Activated CD4-positive, alpha-beta T cell treated with anti-CD3 and anti-CD28 coated beads, Interleukin-2, amount 10 ng/mL, durations not matched to agents 24 days and 14 days (primary cell): ENCODE measurements at regions of chr11 and their contacts with region 1.

Region 1: DNA sequence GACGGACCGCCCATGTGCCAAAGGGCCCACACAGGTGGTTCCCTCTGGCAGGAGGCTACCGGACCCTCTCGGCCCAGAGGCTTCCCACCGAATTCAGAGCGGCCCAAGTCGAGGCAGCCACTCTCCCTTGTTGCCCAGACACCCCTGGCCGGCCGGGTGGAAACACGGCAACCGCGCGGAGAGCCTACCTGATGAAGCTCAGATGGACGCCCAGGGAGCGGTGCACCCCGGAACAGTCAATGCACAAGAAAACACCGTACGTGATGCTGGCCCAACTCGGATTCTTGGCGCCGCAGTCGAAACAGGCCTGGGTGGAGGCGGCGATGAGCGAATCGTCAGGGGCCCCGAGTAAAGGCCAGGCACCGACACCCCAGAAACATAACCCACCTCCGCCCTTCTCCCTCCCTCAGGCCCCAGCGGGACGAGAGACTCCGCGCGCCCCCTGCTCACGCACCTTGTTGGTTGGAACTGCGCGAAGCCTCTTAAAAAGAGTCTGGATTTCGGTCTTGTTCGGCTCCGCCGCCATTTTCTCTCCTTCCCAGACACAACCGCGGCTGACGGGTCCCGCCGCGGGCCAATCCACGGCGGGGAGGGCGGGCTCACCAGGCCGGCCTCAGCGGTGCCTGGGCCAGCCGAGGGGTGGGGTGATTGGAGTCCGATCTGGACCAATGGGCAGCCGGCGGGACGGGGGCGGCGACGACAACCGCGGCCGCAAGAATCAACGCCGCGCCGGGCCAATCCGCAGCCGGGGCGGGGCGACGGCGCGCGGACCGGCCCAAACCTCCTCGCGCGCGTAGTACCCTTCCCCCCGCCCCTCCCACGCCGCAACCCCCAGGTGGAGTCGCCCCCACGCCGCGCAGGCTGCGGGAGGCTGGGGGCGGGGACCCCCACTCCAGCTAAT is at the start of gene ARFGAP2:
- DNase-seq: peak; percentile 99
- H3K4me3 Mint-ChIP-seq: peak within 1 kb of the TSS; percentile 92
- H3K27ac Mint-ChIP-seq: peak within 1 kb of the TSS; percentile 99
- H3K4me1 Mint-ChIP-seq: peaks cover 32% of the 10 kb centered on the region
- H3K27me3 Mint-ChIP-seq: no peaks in the 10 kb centered on the region
- total RNA-seq, gene ARFGAP2: 98.3 and 109 TPM in 2 replicates

Region 2: GRCh38 chr11:46700241-46701077 is 476.1 kb before region 1 on chr11 and contains the starts of genes ARHGAP1 and ZNF408:
- intact Hi-C with region 1: loop called (anchors 2 kb)
- DNase-seq: peak; percentile 100
- H3K4me3 Mint-ChIP-seq: peak within 1 kb of the TSS; percentile 99
- H3K27ac Mint-ChIP-seq: peak within 1 kb of the TSS; percentile 98
- H3K4me1 Mint-ChIP-seq: peaks cover 38% of the 10 kb centered on the region
- H3K27me3 Mint-ChIP-seq: peaks cover 3% of the 10 kb centered on the region
- total RNA-seq, gene ARHGAP1: 59.1 and 61.7 TPM in 2 replicates
- total RNA-seq, gene ZNF408: 12.9 and 14.1 TPM in 2 replicates

Region 3: DNA sequence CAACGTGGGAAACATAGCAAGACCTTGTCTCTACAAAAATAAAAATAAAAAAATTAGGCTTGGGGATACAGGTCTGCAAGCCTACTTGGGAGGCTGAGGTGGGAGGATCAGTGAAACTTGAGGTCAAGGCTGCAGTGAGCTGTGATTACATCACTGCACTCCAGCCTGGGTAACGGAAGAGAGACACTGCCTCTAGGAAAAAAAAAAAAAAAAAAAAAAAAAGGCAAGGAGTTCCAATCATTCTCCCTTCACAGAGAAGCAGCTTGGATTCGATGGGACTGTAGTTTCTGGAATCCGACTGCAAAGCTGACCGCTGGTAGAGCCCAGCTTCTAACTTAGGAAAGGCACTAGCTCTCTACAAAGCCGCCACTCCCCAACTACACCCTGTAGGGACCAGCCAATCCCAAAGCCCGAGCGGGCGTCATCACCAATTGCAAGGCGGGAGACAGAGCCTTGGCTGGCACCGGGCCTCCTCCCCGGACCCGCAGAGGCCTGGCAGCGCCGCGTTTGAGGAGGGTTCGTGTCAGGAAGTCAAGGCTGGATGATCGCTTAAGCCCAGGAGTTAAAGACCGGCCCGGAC is 37.5 kb after region 1 on chr11:
- intact Hi-C with region 1: loop called (anchors 1 kb)
- DNase-seq: peak; percentile 93
- H3K4me3 Mint-ChIP-seq: peak overlapping the region; percentile 99
- H3K27ac Mint-ChIP-seq: peak overlapping the region; percentile 100
- H3K4me1 Mint-ChIP-seq: peaks cover 37% of the 10 kb centered on the region
- H3K27me3 Mint-ChIP-seq: no peaks in the 10 kb centered on the region

Region 4: DNA sequence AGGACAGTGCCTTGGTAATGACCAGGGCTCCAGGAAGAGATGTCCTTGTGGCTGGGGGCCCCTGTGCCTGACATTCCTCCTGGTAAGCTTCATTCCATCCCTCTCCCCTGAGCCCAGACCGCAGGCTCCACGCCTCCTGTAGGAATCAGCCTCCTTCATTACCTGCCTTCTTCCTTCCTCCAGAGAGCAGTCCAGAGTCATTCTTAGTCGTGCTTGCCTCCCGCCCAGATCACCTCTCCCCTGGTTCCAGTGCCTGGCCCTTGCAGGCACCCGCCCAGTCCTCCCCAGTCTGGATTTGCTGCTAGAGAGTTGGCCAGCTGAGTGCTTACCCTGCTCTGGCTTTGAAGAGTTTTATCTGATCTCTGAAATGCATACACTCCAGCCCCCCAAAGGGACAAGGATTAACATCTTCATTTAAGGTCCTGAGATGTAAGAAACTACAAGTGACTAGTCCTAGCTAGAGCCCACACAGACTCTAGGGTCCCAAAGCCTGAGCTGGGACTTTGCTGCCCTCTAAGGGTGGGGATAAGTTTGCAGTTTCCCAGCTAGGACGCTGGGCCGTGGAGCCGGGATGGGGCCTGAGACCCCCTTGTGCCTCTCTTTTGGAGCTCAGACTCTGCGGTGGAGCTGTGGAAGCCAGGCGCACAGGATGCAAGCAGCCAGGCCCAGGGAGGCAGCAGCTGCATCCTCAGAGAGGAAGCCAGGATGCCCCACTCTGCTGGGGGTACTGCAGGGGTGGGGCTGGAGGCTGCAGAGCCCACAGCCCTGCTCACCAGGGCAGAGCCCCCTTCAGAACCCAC is 82.8 kb after region 1 on chr11:
- intact Hi-C with region 1: loop called (anchors 1 kb)
- DNase-seq: peak; percentile 84
- H3K4me3 Mint-ChIP-seq: no peak overlapping the region
- H3K27ac Mint-ChIP-seq: peak overlapping the region; percentile 7
- H3K4me1 Mint-ChIP-seq: peaks cover 15% of the 10 kb centered on the region
- H3K27me3 Mint-ChIP-seq: no peaks in the 10 kb centered on the region

Region 5: DNA sequence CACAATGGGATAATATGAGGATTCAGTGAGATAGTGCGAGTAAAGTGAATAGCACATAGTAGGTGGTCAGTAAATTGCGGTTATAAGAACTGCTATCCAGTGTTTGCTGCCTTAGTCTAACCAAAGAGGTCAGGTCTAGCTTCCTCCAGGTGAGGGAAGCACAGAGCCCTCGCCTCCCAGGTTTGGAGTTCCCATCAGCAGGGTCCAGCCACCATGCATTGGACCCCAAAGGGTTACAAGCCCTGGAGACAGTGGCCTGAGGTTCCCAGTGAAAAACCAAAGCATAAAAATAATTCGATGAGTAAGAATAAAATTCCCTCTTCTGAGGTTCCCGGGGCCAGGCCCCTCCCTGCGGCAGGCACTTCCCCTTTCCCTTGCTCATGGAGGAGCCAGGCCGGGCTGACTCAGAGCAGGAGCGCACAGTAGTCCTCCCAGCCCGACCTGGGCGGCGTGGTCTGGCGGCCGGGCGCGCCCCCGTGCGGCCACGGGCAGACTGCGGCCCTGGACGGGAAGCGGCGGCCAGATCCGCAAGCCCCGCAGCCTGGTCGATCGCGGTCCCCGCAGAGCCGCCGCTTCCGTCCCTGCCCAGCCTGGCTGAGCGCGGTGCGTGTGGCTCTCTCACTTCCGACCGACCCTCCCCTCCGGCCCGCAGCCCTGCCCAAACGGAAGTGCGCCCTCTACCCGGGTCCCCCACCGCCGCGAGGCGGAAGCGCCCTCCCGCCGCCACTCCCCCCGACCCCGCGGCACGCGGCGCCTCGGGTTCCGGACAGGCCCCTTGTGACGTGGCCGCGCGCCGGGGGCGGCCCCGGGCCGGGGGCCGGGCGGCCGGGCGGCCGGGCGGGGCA is 231.4 kb after region 1 on chr11 and contains the start of gene SLC39A13:
- intact Hi-C with region 1: loop called (anchors 1 kb)
- DNase-seq: peak; percentile 98
- H3K4me3 Mint-ChIP-seq: peak within 1 kb of the TSS; percentile 97
- H3K27ac Mint-ChIP-seq: peak within 1 kb of the TSS; percentile 97
- H3K4me1 Mint-ChIP-seq: peaks cover 19% of the 10 kb centered on the region
- H3K27me3 Mint-ChIP-seq: no peaks in the 10 kb centered on the region
- total RNA-seq, gene SLC39A13: 13.2 and 13.3 TPM in 2 replicates